B cell (primary cell): ENCODE measurements at regions of chr6 and their contacts with region 1.

Region 1: GRCh38 chr6:47483853-47484546 is 6.4 kb downstream of the CD2AP start:
- DNase-seq: no peak
- ATAC-seq: no peak
- H3K4me3 ChIP-seq: no peak overlapping the region
- H3K4me3 Mint-ChIP-seq: no peak overlapping the region
- H3K27ac ChIP-seq: no peak overlapping the region
- H3K27ac Mint-ChIP-seq: no peak overlapping the region
- H3K4me1 ChIP-seq: peaks cover 12 to 23% of the 10 kb centered on the region in 2 donors
- H3K4me1 Mint-ChIP-seq: peaks cover 51% of the 10 kb centered on the region
- H3K27me3 ChIP-seq: no peaks in the 10 kb centered on the region
- H3K27me3 Mint-ChIP-seq: no peaks in the 10 kb centered on the region
- CTCF ChIP-seq: no peak

Region 2: DNA sequence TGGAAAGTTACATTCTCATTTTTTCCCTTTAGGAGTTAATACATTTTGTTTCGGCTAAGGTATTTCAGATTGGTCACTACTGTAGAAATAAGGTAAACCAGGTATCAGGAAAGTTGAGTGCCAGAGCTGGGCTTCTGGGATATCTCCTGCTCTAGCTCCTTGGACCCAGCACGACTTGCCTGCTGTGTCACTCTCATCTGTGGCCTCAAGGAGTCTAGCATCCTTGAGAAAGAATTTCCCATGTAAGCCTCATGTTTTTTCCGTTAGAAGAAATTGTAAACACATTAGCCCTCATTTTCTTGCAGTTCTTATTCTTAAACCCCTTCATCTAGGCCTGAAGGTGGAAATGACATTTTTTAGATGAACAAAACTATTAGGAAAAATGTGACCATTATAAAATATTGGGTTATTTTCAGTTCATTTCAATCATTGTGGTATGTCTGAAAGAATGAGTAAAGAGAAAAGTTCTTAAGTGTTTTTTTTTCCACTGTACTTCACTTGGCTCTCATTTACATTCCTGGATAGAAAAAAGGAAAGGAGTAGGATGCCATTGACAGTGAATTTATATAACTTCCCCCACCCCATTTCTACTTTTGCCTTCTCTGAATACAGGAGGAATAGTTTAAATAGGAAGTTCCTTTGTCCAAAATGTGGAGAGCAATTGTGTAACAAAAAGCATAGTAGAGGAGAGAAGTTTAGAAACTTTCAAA is 40.3 kb after region 1 on chr6:
- CTCF ChIA-PET with region 1: no interaction called
- POLR2A ChIA-PET with region 1: no interaction called
- intact Hi-C with region 1: loop called (anchors 5 kb)
- DNase-seq: no peak
- ATAC-seq: no peak
- H3K4me3 ChIP-seq: no peak overlapping the region
- H3K4me3 Mint-ChIP-seq: no peak overlapping the region
- H3K27ac ChIP-seq: no peak overlapping the region
- H3K27ac Mint-ChIP-seq: no peak overlapping the region
- H3K4me1 ChIP-seq: peaks cover 0 to 4% of the 10 kb centered on the region in 2 donors
- H3K4me1 Mint-ChIP-seq: peaks cover 48% of the 10 kb centered on the region
- H3K27me3 ChIP-seq: no peaks in the 10 kb centered on the region
- H3K27me3 Mint-ChIP-seq: no peaks in the 10 kb centered on the region
- CTCF ChIP-seq: no peak